Heart right ventricle (tissue), 16 donors: ENCODE measurements at regions of chr11 and their contacts with region 1.

Region 1: GRCh38 chr11:114197799-114198500 is 98.2 kb upstream of the NNMT start:
- DNase-seq: peak; percentile 70 to 80
- ATAC-seq: peak; percentile 81 to 92 (median 86)
- H3K4me3 ChIP-seq: peak overlapping the region in 2 of 10 donors; percentile 5 to 23
- H3K27ac ChIP-seq: peak overlapping the region; percentile 83 to 96 (median 88)
- H3K4me1 ChIP-seq: peaks cover 57 to 100% (median 96%) of the 10 kb centered on the region in 9 donors
- H3K27me3 ChIP-seq: no peaks in the 10 kb centered on the region
- CTCF ChIP-seq: no peak

Region 2: DNA sequence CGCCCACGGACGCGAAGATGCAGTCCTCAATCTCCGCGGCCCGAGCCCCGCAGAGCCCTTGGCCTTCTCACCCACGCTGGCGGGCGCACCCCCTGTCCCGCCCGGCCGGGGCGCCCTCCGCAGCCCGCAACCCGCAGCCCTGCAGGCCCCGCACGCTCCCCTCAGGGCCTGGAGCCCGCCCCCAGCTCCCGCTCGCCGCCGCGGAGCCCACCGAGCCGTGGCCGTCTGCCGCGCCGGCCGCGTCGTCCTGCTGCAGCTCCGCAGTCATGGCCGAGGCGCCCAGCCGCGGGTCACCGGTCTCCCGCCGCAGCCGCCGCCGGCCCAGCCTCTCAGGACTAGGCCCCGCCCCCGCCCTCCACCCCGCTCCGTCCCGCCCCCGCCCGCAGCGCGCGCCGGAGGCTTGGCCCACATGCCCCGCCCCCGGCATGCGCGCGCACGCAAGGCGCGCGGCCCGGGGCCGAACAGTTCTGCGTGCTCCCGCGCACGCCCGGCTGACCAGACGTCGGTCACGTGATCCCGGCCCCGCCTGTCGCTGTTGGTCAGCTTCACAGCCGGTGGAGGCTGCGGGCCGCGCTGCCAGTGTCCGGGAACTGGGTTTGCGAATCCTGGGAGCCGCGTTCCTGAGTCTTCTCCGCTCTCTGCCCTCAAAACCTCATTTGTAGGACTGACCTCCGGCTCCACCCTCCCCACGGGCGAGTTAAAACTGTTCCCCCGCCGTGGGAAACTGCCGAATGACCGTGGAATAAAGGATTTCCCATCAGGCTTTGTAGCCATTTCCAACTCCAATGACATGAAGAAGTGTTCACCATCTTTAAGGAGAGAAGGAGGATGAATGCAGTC is 322.5 kb before region 1 on chr11 and contains the start of gene USP28:
- intact Hi-C with region 1: loop called in 2 of 10 experiments (anchors 10 kb)
- DNase-seq: peak; percentile 97 to 98
- ATAC-seq: peak; percentile 82 to 96 (median 90)
- H3K4me3 ChIP-seq: peak within 1 kb of the TSS; percentile 50 to 91 (median 84)
- H3K27ac ChIP-seq: peak within 1 kb of the TSS; percentile 80 to 98 (median 94)
- H3K4me1 ChIP-seq: peaks cover 0 to 50% (median 30%) of the 10 kb centered on the region in 9 donors
- H3K27me3 ChIP-seq: no peaks in the 10 kb centered on the region
- CTCF ChIP-seq: peak in 2 of 9 donors; percentile 16 to 18
- total RNA-seq, gene USP28: 72.2 to 174 (median 136) TPM

Region 3: GRCh38 chr11:114066046-114066648 is 131.8 kb before region 1 on chr11:
- intact Hi-C with region 1: no loop called
- DNase-seq: no peak
- ATAC-seq: no peak
- H3K4me3 ChIP-seq: peak overlapping the region in 2 of 10 donors; percentile 2 to 6
- H3K27ac ChIP-seq: peak overlapping the region in 5 of 10 donors; percentile 4 to 48 (median 9)
- H3K4me1 ChIP-seq: peaks cover 47 to 98% (median 93%) of the 10 kb centered on the region in 9 donors
- H3K27me3 ChIP-seq: no peaks in the 10 kb centered on the region
- CTCF ChIP-seq: no peak

Region 4: GRCh38 chr11:114236829-114237228 is 38.9 kb after region 1 on chr11:
- intact Hi-C with region 1: loop called in 2 of 10 experiments (anchors 5 kb)
- DNase-seq: no peak
- ATAC-seq: peak in 1 of 8 donors; percentile 21
- H3K4me3 ChIP-seq: no peak overlapping the region
- H3K27ac ChIP-seq: no peak overlapping the region
- H3K4me1 ChIP-seq: peaks cover 8 to 83% (median 61%) of the 10 kb centered on the region in 9 donors
- H3K27me3 ChIP-seq: no peaks in the 10 kb centered on the region
- CTCF ChIP-seq: no peak

Region 5: DNA sequence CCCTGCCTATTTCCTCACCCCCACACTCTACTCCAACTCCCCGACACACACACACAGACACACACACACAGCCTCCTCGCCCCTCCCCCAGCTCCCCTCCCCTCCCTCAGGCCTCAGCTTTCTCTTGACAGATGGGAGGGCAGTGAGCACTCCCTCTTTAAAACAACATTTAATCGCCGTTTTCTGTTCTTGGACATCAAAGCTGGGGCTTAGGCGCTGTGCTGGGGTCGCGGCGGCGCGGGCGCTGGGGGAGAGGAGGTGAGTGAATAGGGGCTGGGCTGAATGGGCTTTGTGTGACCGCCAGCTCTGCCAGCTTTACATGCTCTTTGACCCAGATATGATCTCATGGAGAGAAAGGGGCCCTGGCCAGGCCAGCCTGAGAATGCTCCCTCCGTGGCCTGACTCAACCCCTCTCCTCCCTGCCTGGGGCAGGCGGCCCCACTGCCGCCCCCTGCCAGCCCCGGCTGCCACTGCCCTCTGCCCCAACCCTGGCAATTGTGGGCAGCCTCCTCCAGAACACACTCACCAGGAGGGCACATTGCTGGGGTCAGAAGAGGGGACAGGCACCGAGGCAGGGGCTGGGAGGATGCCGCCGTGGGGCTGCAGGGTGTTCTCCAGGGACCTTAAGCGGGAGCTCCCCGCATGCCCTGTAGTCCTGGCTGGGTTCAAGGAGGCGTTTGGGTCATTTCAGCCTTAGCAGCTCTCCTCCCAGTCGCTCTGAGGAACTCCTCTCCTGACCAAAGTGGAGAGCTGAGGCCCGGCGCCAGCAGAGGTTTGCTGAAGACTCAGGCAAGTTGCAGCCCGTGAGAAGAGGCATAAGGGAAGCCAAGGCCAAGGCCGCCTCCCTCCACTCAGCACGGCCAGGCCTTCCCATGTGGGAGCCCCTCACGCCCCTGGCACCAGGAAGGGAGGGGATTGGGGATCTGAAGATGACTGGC is 59.9 kb after region 1 on chr11:
- intact Hi-C with region 1: loop called in 5 of 10 experiments (anchors 5 to 10 kb)
- DNase-seq: peak; percentile 53 to 68
- ATAC-seq: peak; percentile 49 to 76 (median 62)
- H3K4me3 ChIP-seq: peak overlapping the region in 7 of 10 donors; percentile 6 to 36 (median 25)
- H3K27ac ChIP-seq: peak overlapping the region; percentile 28 to 87 (median 73)
- H3K4me1 ChIP-seq: peaks cover 20 to 60% (median 56%) of the 10 kb centered on the region in 9 donors
- H3K27me3 ChIP-seq: no peaks in the 10 kb centered on the region
- CTCF ChIP-seq: peak in 7 of 9 donors; percentile 13 to 57 (median 45)

Region 6: DNA sequence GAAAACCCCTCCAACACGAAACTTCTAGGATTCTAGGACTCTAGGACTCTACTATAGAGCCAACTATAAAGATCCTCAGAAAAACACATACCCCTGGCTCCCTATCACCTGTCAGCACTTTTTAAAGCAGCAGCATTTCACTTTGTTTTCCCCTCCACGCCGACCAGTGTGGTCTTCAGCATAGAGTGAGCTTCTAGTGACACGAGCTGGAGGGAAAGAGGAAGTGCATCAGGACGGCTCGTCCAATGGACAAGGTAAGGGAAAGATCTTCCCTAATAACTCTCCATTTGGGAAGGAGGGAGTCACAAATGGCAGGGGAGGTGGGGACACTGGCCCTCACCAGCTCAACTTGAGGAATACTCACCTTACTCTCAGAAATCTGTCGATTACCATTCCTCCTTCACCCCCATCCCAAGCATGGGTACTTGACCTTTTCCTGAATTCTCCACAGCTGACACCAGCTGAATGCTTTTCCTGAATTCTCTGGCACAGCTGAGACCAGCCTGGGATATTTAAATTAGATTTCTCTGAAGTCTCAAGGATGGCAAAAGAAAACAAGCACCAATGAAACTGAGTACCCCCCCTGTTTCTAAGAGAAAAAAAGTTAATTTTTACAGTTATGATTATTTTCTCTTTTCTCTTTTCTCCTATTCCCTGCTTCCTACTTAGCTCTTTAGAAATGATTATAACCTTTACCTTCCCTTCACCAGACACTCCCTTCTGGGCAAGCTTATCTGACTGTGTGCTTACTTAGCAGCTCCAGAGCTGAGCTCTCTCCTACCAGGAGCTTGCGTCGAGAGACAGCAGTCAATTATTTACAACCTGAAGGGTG is 64.9 kb after region 1 on chr11:
- intact Hi-C with region 1: loop called in 5 of 10 experiments (anchors 5 to 10 kb)
- DNase-seq: peak in 1 of 2 donors; percentile 43
- ATAC-seq: peak; percentile 26 to 57 (median 50)
- H3K4me3 ChIP-seq: no peak overlapping the region
- H3K27ac ChIP-seq: peak overlapping the region in 1 of 10 donors; percentile 28
- H3K4me1 ChIP-seq: peaks cover 19 to 48% (median 39%) of the 10 kb centered on the region in 9 donors
- H3K27me3 ChIP-seq: no peaks in the 10 kb centered on the region
- CTCF ChIP-seq: peak; percentile 38 to 81 (median 70)